ENCODE measurements at regions of chr6 and their contacts with region 1.

Region 1: DNA sequence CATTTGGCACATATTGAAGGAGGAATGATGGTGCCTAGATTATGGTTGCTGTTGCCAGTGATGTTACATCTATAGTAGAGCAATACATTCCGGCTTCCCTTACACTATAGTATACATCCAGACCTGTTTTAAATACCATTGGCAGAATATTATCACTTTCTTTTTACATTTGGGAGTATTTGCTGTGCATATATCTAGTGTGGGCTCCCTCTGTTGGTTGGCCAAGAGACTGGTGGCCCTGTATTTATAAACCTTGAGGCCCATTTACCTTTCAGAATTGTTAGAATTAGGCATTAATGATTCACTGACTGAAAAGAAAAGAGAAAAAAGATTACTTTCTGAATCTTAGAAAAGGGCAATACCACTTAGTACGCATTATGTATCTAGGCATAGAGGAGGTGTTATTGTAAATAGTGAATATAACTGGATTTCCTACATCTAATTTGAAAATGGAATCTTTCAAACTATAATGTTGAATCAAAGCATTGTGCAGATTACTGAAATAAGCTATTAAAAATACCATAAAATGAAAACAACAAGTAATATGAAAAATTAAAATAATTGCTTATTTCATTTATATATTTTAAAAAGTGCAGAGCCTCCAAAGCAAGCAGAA is 628.8 kb upstream of the MAN1A1 start:
- DNase-seq: peak in 4 of 7 donors; percentile 20 to 59 (median 29)
- H3K4me3 ChIP-seq: no peak overlapping the region
- H3K27ac ChIP-seq: no peak overlapping the region
- H3K4me1 ChIP-seq: no peaks in the 10 kb centered on the region
- H3K27me3 ChIP-seq: no peaks in the 10 kb centered on the region
- CTCF ChIP-seq: peak; percentile 23 to 55 (median 36)
- POLR2A ChIP-seq: no peak

Region 2: GRCh38 chr6:119147101-119148053 is 831.0 kb before region 1 on chr6:
- intact Hi-C with region 1: loop called in 1 of 2 experiments (anchors 10 kb)
- DNase-seq: peak; percentile 76 to 86 (median 84)
- H3K4me3 ChIP-seq: peak overlapping the region in 1 of 4 donors; percentile 19
- H3K27ac ChIP-seq: peak overlapping the region in 2 of 5 donors; percentile 69 to 85
- H3K4me1 ChIP-seq: peaks cover 10 to 18% of the 10 kb centered on the region in 2 donors
- H3K27me3 ChIP-seq: no peaks in the 10 kb centered on the region
- CTCF ChIP-seq: no peak
- POLR2A ChIP-seq: no peak

Region 3: DNA sequence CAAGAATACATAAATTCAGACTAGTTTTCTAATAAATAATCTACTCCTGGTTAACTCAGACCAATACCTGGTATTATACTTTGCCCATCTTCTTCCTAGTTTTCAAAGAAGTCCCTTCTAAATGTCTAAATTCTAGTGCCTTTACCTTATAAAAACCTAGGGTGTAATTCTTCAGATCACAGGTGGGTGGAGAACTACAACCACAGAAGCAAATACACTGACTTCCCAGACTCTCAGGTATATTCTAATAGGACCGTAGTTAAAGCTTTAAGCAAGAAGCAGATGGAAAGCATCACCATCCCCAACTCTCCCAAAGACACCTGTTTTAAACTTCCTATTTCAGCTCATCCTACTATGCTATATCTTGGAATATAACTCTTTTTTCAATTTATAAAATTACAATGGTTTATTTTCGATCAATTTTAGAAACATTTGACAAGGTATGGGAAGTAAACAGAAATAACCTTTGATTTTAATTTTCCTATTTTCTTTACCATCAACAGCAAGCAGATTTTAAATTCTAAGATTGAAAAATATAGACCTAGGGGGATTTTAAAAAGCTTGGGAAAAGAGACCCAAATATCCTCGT is 644.6 kb before region 1 on chr6:
- intact Hi-C with region 1: no loop called
- DNase-seq: no peak
- H3K4me3 ChIP-seq: no peak overlapping the region
- H3K27ac ChIP-seq: no peak overlapping the region
- H3K4me1 ChIP-seq: peaks cover 0 to 53% of the 10 kb centered on the region in 2 donors
- H3K27me3 ChIP-seq: no peaks in the 10 kb centered on the region
- CTCF ChIP-seq: peak in 4 of 6 experiments; percentile 35 to 52 (median 44)
- POLR2A ChIP-seq: no peak

Measured in adrenal gland (tissue), 19 donors.